ENCODE measurements at regions of chr2 and their contacts with region 1.

Region 1: DNA sequence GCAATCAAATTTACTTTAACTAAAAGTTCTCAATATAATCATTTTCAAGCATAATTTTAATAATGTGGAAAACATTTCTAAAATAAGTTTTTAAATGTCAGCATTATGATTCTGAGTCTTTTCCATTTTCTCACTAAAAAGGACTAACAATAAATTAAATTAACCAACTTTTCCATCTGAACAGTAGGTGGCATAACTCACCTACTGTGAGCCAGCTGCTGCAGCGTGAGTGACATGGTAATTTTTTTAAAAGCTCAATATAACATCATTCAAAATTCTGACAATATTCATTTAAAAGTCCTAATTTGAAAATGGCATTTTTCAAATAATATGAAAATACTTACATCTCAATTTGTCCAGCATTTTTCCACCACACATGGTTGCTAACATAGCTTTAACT is 66.5 kb downstream of the DTNB start:
- DNase-seq: no peak
- H3K4me3 ChIP-seq: no peak overlapping the region
- H3K27ac ChIP-seq: no peak overlapping the region
- H3K4me1 ChIP-seq: no peaks in the 10 kb centered on the region
- H3K27me3 ChIP-seq: no peaks in the 10 kb centered on the region
- CTCF ChIP-seq: peak in 2 of 3 experiments; percentile 40 to 46; a peak in 3 of 4 replicates
- EP300 ChIP-seq: no peak
- POLR2A ChIP-seq: no peak
- RAD21 ChIP-seq: peak; percentile 73 to 79

Region 2: DNA sequence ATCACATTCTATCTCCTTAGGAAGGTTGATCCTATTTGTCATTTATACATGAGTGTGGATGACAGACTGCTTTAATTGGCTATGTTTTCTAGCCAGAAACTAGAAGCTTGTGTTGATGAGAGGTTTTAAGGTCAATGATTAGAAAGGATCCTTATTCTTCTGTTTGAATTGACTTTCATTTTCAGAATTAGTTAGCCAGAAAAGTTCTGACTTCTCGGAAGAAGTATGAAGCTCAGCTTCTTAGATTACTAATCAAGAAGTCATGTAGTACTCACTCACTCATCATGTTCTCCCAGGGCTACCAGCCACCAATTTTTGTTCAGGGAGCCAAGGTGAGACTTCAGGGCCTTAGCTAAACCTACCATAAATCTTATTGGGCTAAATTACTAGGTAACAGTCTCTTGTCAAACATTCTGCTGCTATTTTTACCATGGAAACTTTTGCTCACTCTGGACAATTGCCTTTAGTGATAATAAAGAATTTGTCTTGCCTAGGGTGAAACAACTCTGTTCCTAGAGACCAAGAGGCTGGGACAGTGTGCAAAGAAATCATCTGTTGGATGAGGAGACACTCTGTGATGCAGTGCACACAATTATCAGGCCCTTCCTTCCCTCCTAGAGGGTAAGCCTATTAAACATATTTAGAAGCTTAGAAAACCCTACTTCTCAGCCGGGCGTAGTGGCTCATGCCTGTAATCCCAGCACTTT is 153.5 kb before region 1 on chr2:
- CTCF ChIA-PET with region 1: no interaction called
- POLR2A ChIA-PET with region 1: no interaction called
- DNase-seq: no peak
- H3K4me3 ChIP-seq: no peak overlapping the region
- H3K27ac ChIP-seq: no peak overlapping the region
- H3K4me1 ChIP-seq: no peaks in the 10 kb centered on the region
- H3K27me3 ChIP-seq: no peaks in the 10 kb centered on the region
- CTCF ChIP-seq: no peak
- EP300 ChIP-seq: no peak
- POLR2A ChIP-seq: no peak
- RAD21 ChIP-seq: no peak

Region 3: DNA sequence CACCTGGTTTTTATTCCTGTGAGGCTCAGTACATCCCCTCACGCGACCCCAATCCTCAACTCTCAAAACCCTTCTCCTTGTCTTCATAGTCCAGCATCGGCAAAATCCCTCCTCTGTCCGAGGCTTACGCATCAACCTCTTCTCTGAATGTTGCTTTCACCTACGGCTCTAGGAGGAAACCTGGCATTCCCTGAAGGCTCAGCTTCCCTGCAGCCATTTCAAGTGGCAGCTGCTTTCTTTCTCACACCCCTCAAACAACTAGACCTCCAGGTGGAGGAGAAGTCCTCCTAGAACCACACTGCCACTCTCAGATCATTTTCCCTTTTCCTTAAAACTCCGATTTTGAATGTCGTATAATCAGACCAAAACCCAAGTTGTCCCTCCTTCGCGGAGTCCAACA is 47.7 kb before region 1 on chr2:
- CTCF ChIA-PET with region 1: no interaction called
- POLR2A ChIA-PET with region 1: no interaction called
- DNase-seq: no peak
- H3K4me3 ChIP-seq: no peak overlapping the region
- H3K27ac ChIP-seq: no peak overlapping the region
- H3K4me1 ChIP-seq: no peaks in the 10 kb centered on the region; a peak in 1 of 7 replicates
- H3K27me3 ChIP-seq: no peaks in the 10 kb centered on the region
- CTCF ChIP-seq: no peak
- EP300 ChIP-seq: no peak
- POLR2A ChIP-seq: no peak
- RAD21 ChIP-seq: no peak

Region 4: DNA sequence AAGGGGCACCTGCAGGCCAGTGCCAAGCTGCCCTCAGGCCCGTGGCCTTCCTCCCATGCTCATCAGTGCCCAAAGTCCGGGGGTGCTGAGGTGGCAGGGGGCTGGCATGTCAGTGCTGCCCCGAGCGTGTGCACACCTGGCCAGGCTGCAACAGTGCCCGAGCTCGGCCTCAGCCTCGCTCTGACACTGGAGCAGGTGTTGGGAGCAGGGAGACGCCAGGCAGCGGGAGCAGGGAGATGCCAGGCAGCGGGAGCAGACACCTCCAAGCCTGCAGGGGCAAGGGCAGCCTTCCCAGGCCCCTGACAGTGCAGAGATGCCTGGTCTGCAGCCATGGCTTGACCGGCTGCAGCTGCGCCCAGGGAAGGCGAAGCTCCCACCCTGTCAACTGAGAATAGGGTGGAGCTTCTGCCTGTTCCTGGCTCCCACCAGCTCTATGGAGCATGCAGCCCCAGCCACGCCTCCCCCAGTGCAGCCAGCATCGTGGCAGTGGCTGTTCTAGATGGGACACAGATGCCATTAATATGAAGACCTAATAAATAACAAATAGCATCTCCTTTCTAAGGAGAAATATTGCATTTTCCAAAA is 15.9 kb before region 1 on chr2:
- CTCF ChIA-PET with region 1: interaction called, 17 read pairs
- POLR2A ChIA-PET with region 1: no interaction called
- DNase-seq: no peak
- H3K4me3 ChIP-seq: no peak overlapping the region
- H3K27ac ChIP-seq: no peak overlapping the region
- H3K4me1 ChIP-seq: peaks cover 0 to 4% (median 2%) of the 10 kb centered on the region in 4 experiments; a peak in 2 of 7 replicates
- H3K27me3 ChIP-seq: no peaks in the 10 kb centered on the region
- CTCF ChIP-seq: no peak
- EP300 ChIP-seq: no peak
- POLR2A ChIP-seq: no peak
- RAD21 ChIP-seq: no peak

Region 5: GRCh38 chr2:25618642-25619037 is 11.7 kb after region 1 on chr2:
- CTCF ChIA-PET with region 1: interaction called, 13 read pairs
- POLR2A ChIA-PET with region 1: interaction called, 4 read pairs
- DNase-seq: no peak
- H3K4me3 ChIP-seq: no peak overlapping the region
- H3K27ac ChIP-seq: no peak overlapping the region
- H3K4me1 ChIP-seq: peaks cover 3 to 10% (median 5%) of the 10 kb centered on the region in 4 experiments; a peak in 4 of 7 replicates
- H3K27me3 ChIP-seq: no peaks in the 10 kb centered on the region
- CTCF ChIP-seq: no peak
- EP300 ChIP-seq: no peak
- POLR2A ChIP-seq: no peak
- RAD21 ChIP-seq: no peak

Region 6: DNA sequence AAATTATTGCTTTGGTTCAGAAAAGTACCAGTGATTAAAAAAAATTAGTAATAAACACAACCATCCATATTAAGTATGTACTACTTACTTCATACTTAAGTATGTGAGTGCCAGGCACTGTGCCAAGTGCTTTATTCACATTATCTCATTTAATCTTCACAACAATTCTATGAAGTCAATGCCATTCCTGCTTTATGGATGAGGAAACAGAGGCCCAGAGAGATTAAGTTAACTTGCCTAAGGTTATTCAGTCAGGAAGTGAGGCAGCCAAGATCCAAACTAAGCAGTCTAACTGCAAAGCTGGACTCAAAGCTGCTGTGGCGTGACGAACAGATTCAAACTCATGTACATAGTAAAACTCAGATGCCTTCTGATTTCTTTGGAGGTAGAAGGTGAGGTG is 44.2 kb after region 1 on chr2:
- CTCF ChIA-PET with region 1: interaction called, 13 read pairs
- POLR2A ChIA-PET with region 1: no interaction called
- DNase-seq: no peak
- H3K4me3 ChIP-seq: no peak overlapping the region
- H3K27ac ChIP-seq: no peak overlapping the region
- H3K4me1 ChIP-seq: no peaks in the 10 kb centered on the region
- H3K27me3 ChIP-seq: no peaks in the 10 kb centered on the region
- CTCF ChIP-seq: no peak
- EP300 ChIP-seq: no peak
- POLR2A ChIP-seq: no peak
- RAD21 ChIP-seq: no peak

Region 7: GRCh38 chr2:25664183-25664964 is 57.5 kb after region 1 on chr2:
- CTCF ChIA-PET with region 1: interaction called, 72 read pairs
- POLR2A ChIA-PET with region 1: no interaction called
- DNase-seq: peak; percentile 43 to 62
- H3K4me3 ChIP-seq: no peak overlapping the region
- H3K27ac ChIP-seq: no peak overlapping the region
- H3K4me1 ChIP-seq: peaks cover 0 to 8% (median 2%) of the 10 kb centered on the region in 4 experiments; a peak in 3 of 7 replicates
- H3K27me3 ChIP-seq: no peaks in the 10 kb centered on the region
- CTCF ChIP-seq: peak; percentile 50 to 87 (median 79)
- EP300 ChIP-seq: no peak
- POLR2A ChIP-seq: no peak
- RAD21 ChIP-seq: peak; percentile 87 to 91

Region 8: DNA sequence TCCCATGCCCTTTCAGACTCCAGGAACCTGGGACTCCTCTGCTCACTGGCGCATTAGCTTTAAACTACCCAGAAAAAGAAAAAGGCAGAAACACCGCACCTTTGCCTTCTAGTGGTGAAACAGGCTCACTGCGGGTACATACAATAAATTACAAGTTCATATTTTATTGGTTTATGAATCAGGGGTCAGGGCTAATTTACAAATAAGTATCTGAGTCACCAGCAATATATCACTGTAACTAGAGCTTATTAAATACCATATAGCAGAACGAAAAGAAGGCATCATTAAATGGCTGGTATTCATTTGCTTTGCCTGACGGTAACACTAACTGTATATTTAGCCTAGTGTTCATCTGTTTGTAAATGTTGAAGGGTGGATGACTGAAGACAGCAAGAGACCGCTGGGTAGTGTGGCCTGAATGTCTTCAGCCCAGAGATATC is 93.3 kb after region 1 on chr2:
- CTCF ChIA-PET with region 1: interaction called, 66 read pairs
- POLR2A ChIA-PET with region 1: interaction called, 3 read pairs
- DNase-seq: no peak
- H3K4me3 ChIP-seq: no peak overlapping the region
- H3K27ac ChIP-seq: no peak overlapping the region
- H3K4me1 ChIP-seq: peaks cover 0 to 12% (median 6%) of the 10 kb centered on the region in 4 experiments; a peak in 6 of 7 replicates
- H3K27me3 ChIP-seq: peaks cover 0 to 8% (median under 1%) of the 10 kb centered on the region in 4 experiments; a peak in 2 of 7 replicates
- CTCF ChIP-seq: peak in 2 of 3 experiments; percentile 50 to 74; a peak in 2 of 4 replicates
- EP300 ChIP-seq: no peak
- POLR2A ChIP-seq: no peak
- RAD21 ChIP-seq: peak; percentile 63 to 64

Region 9: GRCh38 chr2:25707927-25708590 is 101.2 kb after region 1 on chr2:
- CTCF ChIA-PET with region 1: interaction called, 16 read pairs
- POLR2A ChIA-PET with region 1: no interaction called
- DNase-seq: no peak
- H3K4me3 ChIP-seq: no peak overlapping the region
- H3K27ac ChIP-seq: no peak overlapping the region
- H3K4me1 ChIP-seq: no peaks in the 10 kb centered on the region
- H3K27me3 ChIP-seq: no peaks in the 10 kb centered on the region
- CTCF ChIP-seq: no peak
- EP300 ChIP-seq: no peak
- POLR2A ChIP-seq: no peak
- RAD21 ChIP-seq: no peak

Measured in H1 (cell line).